Astrocyte of the spinal cord (primary cell): ENCODE measurements at regions of chr2 and their contacts with region 1.

Region 1: GRCh38 chr2:156538083-156538504 is 101.9 kb downstream of the GPD2 start:
- DNase-seq: peak; percentile 43
- H3K4me3 ChIP-seq: no peak overlapping the region
- CTCF ChIP-seq: no peak

Region 2: DNA sequence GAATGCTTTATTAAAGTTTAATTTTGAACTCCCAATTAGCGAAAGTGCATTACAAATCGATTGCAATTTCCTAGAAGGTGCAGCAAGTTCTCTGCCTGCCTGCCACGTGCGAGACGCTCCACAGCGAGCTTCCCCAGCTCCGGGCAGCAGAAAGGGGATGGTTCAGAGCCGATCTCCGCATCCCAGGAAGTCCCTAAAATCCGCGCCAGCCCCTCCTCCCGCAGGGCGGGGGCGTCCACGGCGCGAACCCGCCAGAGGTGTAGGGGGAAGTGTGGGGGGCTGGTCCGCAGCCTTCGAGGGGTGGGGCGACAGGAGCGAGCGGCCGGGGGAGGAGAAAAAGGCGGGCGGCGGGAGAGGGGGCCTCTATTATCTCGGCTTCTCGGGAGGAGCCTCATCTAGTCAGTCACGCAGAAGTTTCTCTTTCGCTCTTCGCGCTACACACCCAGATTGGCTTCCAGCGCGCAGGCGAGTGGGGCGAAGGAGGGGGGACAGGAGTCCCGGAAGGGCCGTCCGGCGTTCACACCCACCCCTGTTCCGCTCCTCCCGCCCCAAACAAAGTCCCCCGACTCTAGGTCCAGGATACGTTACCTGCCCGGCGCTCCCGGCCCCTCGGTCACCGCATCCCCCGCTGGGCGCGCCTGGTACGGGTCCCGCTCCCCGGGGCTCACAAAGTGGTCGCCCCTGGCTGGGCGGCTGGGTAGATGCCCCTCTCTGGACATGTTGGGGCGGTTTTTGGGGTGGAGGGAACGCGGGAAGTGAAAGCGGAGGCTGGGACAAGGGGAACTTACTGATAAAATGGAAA is 196.4 kb before region 1 on chr2:
- in situ Hi-C with region 1: loop called (anchors 25 kb)
- DNase-seq: peak; percentile 94
- H3K4me3 ChIP-seq: peak overlapping the region; percentile 90
- CTCF ChIP-seq: no peak